ENCODE measurements at regions of chr1 and their contacts with region 1.

Region 1: DNA sequence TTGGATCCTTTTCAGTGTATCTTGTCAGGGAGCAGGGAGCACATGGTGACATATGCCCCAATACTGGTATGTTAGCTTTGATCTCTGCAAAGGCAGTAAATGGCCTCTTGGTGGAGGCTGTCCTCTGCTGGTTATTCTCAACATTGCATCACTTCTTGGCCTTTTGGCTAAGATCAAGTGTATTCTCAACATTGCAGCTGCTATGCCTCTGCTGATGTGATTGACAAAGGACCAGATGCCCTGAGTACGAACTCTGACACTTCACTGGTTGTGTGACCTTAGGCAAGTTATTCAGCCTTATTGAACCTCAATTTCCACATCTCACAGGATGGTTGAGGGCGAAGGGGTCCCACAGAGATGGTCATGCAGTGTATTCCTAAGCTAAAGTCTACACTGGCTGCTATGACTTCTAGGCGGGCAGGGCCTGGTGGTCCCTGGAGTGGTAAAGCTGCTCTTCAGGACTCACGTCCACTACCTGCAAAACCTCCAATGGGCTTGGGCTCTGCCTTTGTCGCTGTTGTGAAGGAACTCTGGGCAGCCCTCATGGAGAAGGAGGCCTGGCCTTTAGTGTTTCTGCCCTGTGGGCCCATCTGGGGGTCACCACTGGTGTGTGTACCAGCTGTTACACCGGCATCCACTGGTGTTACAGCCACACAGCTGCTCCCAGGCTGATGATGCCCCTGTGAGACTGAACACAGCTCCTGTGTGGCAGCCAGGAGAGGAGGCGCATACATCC is 64.8 kb downstream of the DNTTIP2 start:
- DNase-seq: peak; percentile 46
- ATAC-seq: peak; percentile 76 to 82

Region 2: GRCh38 chr1:93437976-93438605 is 376.1 kb before region 1 on chr1:
- intact Hi-C with region 1: loop called in 1 of 2 experiments (anchors 2 kb)
- DNase-seq: no peak
- ATAC-seq: peak; percentile 47 to 62

Region 3: DNA sequence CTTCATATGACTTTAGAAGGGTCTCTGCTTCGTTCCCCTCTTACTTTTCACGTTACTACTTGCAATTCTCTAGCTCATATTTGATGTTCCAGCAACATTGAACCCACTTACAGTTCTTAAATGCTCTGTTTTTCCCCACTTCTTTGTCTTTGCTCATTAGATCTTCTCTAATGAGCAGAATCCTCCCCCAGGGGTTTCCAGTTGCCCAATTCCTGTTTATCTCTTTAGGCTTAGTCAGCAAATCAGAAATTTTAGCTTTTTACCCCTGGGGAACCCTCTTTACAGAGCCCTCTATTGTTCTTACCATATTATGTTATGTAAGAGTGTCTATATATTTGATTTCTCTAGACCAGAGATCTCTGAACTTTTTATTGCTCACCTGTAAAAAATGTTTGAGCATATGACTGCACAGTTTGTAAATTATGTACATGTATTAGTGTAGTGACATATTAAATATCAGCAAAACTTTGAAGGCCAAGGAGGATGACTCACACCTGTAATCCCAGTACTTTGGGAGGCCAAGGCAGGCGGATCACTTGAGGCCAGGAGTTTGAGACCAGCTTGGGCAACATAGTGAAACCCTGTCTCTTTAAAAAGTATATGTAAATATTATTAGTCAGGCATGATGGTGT is 294.9 kb before region 1 on chr1:
- intact Hi-C with region 1: no loop called
- DNase-seq: no peak
- ATAC-seq: no peak

Region 4: GRCh38 chr1:93579891-93580290 is 234.3 kb before region 1 on chr1:
- intact Hi-C with region 1: no loop called
- DNase-seq: no peak
- ATAC-seq: peak; percentile 33 to 82

Region 5: DNA sequence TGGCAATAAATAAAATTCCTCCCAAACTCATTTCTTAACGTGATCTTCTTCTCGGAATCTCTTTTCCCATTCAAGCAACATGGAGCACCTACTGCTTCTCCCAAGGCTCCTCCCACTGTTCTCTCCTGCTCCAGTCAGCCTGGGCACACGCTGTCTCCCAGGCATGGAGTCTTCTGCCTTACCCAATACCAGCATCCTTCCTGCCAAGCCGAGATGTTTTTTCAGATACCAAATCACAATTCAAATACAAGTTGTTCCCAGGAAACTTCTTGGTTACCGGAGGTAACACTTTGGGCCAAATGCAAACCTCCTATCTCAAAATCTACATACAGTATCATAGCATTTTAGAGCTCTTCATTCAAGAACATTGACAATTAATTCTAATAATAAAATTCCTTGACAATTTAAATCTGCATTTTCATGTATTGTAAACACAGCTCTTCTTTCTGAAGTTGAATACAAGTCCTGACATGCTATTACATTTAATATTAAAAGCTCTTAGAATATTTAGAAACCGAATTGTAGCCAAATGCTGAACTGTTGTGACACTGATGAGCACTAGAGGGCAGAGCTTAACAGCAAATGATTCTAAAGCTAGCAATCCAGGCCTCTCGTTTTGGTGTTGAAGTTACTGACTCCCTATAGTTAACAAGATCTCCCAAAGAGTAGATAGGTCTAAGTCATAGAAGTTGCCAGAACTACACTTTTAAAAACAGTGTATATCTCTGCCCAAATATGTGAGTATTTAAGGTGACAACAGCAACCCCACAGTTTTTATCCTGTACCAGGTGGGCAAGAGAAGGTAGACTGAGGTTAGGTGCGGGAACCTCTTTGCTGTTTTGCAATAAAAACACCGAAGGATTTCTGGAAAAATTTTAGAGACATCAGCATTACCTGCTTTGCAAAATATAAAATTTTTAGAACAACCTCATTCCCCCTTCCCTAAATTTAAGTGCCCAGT is 184.8 kb before region 1 on chr1:
- intact Hi-C with region 1: loop called (anchors 1 to 2 kb)
- DNase-seq: no peak
- ATAC-seq: peak; percentile 67 to 69

Measured in left cardiac atrium (tissue), 4 donors.